ENCODE measurements at regions of chr2 and their contacts with region 1.

Region 1: GRCh38 chr2:172931918-172932520 is 143.6 kb upstream of the MAP3K20 start:
- DNase-seq: peak; percentile 22
- H3K4me3 Mint-ChIP-seq: no peak overlapping the region
- H3K27ac Mint-ChIP-seq: no peak overlapping the region
- H3K4me1 Mint-ChIP-seq: peaks cover 4% of the 10 kb centered on the region
- H3K27me3 Mint-ChIP-seq: peaks cover 13% of the 10 kb centered on the region

Region 2: DNA sequence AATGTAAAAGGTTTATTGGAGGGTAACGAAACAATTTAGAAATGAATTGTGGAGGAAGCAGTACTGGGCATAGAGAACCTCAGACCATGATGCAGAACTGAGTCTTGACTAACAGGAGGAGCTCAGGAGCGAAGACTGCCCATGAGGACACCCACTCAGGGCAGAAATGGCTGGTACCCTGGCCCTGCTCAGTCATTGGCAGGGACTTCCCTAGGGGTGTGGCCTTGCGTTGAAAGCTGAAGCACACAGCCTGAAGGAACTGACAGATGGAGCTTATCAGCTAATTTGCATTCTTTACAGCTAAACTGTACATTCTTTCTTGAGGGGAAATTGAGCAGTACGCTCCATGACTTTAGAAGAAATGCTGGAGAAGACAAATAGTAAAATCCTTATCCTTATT is 319.0 kb before region 1 on chr2:
- intact Hi-C with region 1: no loop called
- DNase-seq: no peak
- H3K4me3 Mint-ChIP-seq: no peak overlapping the region
- H3K27ac Mint-ChIP-seq: no peak overlapping the region
- H3K4me1 Mint-ChIP-seq: peaks cover 3% of the 10 kb centered on the region
- H3K27me3 Mint-ChIP-seq: no peaks in the 10 kb centered on the region

Region 3: DNA sequence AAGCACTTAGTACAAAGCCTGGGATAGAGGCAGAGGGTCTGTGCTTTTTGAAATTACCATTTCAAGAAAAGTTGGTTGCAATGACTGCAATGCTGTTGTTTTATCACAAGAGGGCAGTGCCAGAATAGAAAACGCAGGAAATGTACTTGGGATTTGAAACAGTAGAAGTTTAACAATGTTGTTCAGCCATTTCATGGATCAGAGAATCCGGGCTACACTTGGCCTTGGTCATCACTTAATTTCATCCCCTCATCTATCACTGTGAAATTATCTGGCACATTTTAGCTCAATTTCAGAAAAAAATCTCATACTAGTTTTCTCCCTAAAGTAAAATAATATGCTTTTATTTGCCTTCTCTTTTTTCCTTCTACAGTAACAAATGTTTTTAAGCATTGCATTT is 125.5 kb before region 1 on chr2:
- intact Hi-C with region 1: loop called (anchors 1 kb)
- DNase-seq: no peak
- H3K4me3 Mint-ChIP-seq: no peak overlapping the region
- H3K27ac Mint-ChIP-seq: no peak overlapping the region
- H3K4me1 Mint-ChIP-seq: peaks cover 1% of the 10 kb centered on the region
- H3K27me3 Mint-ChIP-seq: peaks cover 4% of the 10 kb centered on the region

Region 4: GRCh38 chr2:172864182-172864581 is 67.8 kb before region 1 on chr2:
- intact Hi-C with region 1: loop called (anchors 5 kb)
- DNase-seq: no peak
- H3K4me3 Mint-ChIP-seq: no peak overlapping the region
- H3K27ac Mint-ChIP-seq: no peak overlapping the region
- H3K4me1 Mint-ChIP-seq: no peaks in the 10 kb centered on the region
- H3K27me3 Mint-ChIP-seq: peaks cover 23% of the 10 kb centered on the region

Measured in activated T-helper 2 cell treated with anti-CD3 and anti-CD28 coated beads, Interferon-gamma antibody, Interleukin-2, Interleukin-4, amounts not matched to agents 10 μg/mL and 5 μg/mL and 100 μg/mL, durations not matched to agents 14 hours and 24 hours and 36 hours (primary cell).